ENCODE measurements at regions of chr17 and their contacts with region 1.

Region 1: DNA sequence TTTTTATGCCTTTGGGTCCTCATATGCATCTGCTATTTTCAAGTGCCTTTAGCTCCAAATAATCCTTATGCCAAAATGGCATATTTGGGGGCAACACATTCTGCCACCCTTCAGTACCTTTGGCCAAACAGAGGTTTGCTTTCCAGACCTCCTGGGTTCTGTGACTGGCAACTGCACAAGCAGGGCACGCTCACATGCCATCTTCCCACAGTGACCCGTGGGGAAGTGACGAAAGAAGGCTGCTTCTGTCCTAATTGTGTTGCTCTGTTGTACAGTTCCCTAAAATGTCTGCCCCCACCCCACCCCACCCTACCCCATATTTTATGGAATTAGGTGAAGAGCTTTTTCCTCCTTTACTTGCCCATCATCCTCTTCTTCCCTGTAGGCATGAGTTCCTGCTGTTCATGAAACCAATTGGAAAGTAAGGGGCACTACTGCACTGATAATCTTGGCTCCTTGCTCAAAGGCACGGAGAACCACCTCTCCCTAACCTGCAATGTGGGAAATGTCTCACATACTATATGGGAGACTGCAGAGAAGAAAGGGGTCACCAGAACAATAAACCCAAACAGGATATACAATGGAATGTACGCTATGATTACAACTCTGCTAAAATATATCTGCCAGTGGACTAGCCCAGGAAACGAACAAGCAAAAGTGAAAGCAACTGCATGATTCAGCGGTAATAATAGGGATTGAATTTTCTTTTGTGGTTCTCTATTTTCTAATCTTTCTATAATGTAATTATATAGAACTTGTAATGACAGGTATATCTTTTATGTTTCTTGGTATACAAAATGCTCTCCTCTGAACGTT is 3.3 kb upstream of the SLFN12L start:
- DNase-seq: peak; percentile 73
- H3K4me3 Mint-ChIP-seq: peak overlapping the region; percentile 77
- H3K27ac Mint-ChIP-seq: peak overlapping the region; percentile 97
- H3K4me1 Mint-ChIP-seq: peaks cover 39% of the 10 kb centered on the region
- H3K27me3 Mint-ChIP-seq: no peaks in the 10 kb centered on the region

Region 2: GRCh38 chr17:34980681-34981537 is 559.9 kb before region 1 on chr17:
- CTCF ChIA-PET with region 1: no interaction called
- POLR2A ChIA-PET with region 1: no interaction called
- intact Hi-C with region 1: loop called (anchors 5 kb)
- DNase-seq: peak; percentile 78
- H3K4me3 Mint-ChIP-seq: peak overlapping the region; percentile 90
- H3K27ac Mint-ChIP-seq: peak overlapping the region; percentile 93
- H3K4me1 Mint-ChIP-seq: peaks cover 52% of the 10 kb centered on the region
- H3K27me3 Mint-ChIP-seq: no peaks in the 10 kb centered on the region

Region 3: DNA sequence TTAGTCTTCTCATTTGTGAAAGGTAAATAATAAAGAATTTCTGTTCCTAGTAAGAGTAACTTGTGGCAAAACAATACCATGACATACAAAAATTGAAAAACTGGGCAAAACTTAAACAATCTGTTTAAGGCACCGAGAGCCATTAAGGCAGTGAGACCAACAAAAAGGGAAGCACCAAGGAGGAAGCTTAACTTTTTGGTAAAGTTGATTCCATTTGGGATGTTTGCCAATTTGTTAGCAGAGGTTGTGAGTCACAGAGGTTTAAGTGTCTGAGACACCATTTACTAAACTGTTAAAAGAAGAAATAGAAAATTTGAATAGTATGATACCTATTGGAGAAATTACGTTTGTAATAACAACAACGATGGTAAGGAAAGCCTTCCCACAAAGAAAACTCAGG is 351.5 kb before region 1 on chr17:
- CTCF ChIA-PET with region 1: no interaction called
- POLR2A ChIA-PET with region 1: no interaction called
- intact Hi-C with region 1: no loop called
- DNase-seq: no peak
- H3K4me3 Mint-ChIP-seq: no peak overlapping the region
- H3K27ac Mint-ChIP-seq: no peak overlapping the region
- H3K4me1 Mint-ChIP-seq: peaks cover 46% of the 10 kb centered on the region
- H3K27me3 Mint-ChIP-seq: no peaks in the 10 kb centered on the region

Region 4: DNA sequence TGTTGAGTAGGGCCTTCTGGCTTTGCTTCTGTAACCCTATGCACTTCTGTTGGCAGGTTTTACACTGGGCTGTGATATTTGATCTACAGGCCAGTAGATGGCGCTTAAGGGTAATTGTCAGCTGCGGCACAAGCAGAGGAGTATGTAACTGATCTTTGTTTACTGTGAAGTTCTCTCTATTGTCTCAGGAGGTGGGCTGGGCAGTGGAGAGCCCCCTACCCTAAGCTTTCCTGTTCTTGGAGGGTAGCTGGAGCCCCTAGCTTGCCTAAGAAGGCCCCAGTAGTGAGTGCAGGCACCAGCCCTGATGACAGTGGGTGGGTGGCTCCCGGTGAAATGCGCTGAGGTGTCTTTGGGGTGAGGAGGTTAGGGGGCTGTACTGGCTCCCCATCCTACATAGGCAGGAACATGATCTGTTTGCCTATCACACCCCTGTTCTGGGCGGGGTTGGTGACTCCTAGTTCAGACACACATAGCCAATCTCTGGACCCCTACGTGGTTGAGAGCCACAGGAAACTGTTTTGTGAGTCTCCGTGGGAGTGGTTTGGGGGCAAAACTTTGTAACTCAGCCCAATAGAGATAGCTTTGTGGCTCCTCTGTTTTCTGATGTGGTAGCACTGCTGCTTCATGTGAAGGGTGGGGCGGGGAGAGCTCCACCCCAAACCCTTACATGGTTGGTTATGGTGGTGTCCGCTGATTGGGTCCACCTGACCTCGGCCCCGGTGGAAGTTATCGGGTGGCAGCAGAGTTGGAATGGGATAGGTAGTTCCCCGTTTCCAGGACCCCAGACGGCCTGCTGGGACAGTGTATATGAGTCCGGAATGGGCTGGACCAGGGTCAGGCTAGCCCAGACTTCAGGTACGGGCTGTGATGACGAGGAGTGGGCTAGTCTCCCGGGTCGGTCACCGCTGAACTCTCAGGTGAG is 227.7 kb before region 1 on chr17:
- CTCF ChIA-PET with region 1: interaction called, 177 read pairs
- POLR2A ChIA-PET with region 1: interaction called, 6 read pairs
- intact Hi-C with region 1: loop called (anchors 1 kb)
- DNase-seq: peak; percentile 81
- H3K4me3 Mint-ChIP-seq: peak overlapping the region; percentile 82
- H3K27ac Mint-ChIP-seq: peak overlapping the region; percentile 83
- H3K4me1 Mint-ChIP-seq: peaks cover 30% of the 10 kb centered on the region
- H3K27me3 Mint-ChIP-seq: no peaks in the 10 kb centered on the region

Region 5: GRCh38 chr17:35432176-35433074 is 108.4 kb before region 1 on chr17 and contains the start of gene SLFN12:
- CTCF ChIA-PET with region 1: interaction called, 5 read pairs
- POLR2A ChIA-PET with region 1: no interaction called
- intact Hi-C with region 1: loop called (anchors 2 kb)
- DNase-seq: peak; percentile 61
- H3K4me3 Mint-ChIP-seq: peak within 1 kb of the TSS; percentile 87
- H3K27ac Mint-ChIP-seq: peak within 1 kb of the TSS; percentile 84
- H3K4me1 Mint-ChIP-seq: peaks cover 41% of the 10 kb centered on the region
- H3K27me3 Mint-ChIP-seq: no peaks in the 10 kb centered on the region
- total RNA-seq, gene SLFN12: 10.0 to 10.7 TPM

Region 6: GRCh38 chr17:35486920-35487732 is 53.7 kb before region 1 on chr17:
- CTCF ChIA-PET with region 1: interaction called, 42 read pairs
- POLR2A ChIA-PET with region 1: interaction called, 7 read pairs
- intact Hi-C with region 1: loop called (anchors 2 kb)
- DNase-seq: peak; percentile 93
- H3K4me3 Mint-ChIP-seq: peak overlapping the region; percentile 80
- H3K27ac Mint-ChIP-seq: peak overlapping the region; percentile 88
- H3K4me1 Mint-ChIP-seq: peaks cover 45% of the 10 kb centered on the region
- H3K27me3 Mint-ChIP-seq: no peaks in the 10 kb centered on the region

Region 7: DNA sequence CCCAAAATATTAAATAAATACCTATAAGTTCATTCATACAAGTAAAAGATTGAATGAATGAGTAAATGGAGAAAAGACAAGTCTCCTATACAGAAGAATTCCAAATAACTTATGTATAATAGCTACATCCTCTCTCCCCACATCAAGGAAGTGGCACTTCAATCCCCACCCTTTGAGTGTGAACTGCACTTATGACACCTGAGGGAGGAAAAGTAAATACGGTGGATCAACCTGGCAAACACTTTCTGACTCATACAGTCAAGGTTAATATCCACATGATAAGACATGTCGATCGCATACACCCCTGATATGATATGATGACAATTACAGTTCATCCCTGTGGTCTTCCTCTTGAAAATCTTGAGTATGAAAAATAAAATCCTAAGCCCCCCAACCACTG is 21.4 kb before region 1 on chr17:
- CTCF ChIA-PET with region 1: no interaction called
- POLR2A ChIA-PET with region 1: no interaction called
- intact Hi-C with region 1: no loop called
- DNase-seq: no peak
- H3K4me3 Mint-ChIP-seq: no peak overlapping the region
- H3K27ac Mint-ChIP-seq: no peak overlapping the region
- H3K4me1 Mint-ChIP-seq: peaks cover 85% of the 10 kb centered on the region
- H3K27me3 Mint-ChIP-seq: no peaks in the 10 kb centered on the region

Region 8: GRCh38 chr17:35578197-35578928 is 37.6 kb after region 1 on chr17 and contains the start of gene PEX12:
- CTCF ChIA-PET with region 1: interaction called, 6 read pairs
- POLR2A ChIA-PET with region 1: interaction called, 14 read pairs
- intact Hi-C with region 1: loop called (anchors 1 kb)
- DNase-seq: peak; percentile 92
- H3K4me3 Mint-ChIP-seq: peak within 1 kb of the TSS; percentile 94
- H3K27ac Mint-ChIP-seq: peak within 1 kb of the TSS; percentile 98
- H3K4me1 Mint-ChIP-seq: peaks cover 20% of the 10 kb centered on the region
- H3K27me3 Mint-ChIP-seq: no peaks in the 10 kb centered on the region
- total RNA-seq, gene PEX12: 4.9 to 6.0 TPM

Region 9: DNA sequence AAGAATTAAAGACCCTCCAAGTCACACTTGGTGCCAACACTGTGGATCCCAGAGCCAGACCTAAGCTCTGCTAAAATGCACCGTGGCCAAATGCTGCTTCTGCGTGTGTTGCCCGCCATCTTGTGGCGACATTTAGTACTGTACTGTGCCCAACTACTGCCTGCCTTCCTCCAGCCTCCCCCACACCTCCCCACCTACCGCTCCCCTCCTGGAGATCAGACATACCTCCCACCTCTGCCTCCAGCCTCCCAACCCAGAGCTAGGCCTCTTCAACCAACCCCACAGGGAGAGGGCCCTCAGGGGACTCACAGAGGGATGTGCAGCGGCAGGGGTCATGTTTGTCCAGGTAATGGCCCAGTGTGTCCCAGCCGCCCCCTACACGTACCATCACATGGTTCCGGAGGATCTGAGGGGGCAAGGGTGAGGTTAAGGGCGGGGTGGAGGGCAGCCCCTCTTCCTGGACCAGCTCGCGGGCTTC is 206.8 kb after region 1 on chr17:
- CTCF ChIA-PET with region 1: interaction called, 7 read pairs
- POLR2A ChIA-PET with region 1: no interaction called
- intact Hi-C with region 1: loop called (anchors 1 kb)
- DNase-seq: peak; percentile 86
- H3K4me3 Mint-ChIP-seq: no peak overlapping the region
- H3K27ac Mint-ChIP-seq: no peak overlapping the region
- H3K4me1 Mint-ChIP-seq: peaks cover 5% of the 10 kb centered on the region
- H3K27me3 Mint-ChIP-seq: peaks cover 38% of the 10 kb centered on the region